AG04449 (cell line): ENCODE measurements at regions of chr7 and their contacts with region 1.

Region 1: DNA sequence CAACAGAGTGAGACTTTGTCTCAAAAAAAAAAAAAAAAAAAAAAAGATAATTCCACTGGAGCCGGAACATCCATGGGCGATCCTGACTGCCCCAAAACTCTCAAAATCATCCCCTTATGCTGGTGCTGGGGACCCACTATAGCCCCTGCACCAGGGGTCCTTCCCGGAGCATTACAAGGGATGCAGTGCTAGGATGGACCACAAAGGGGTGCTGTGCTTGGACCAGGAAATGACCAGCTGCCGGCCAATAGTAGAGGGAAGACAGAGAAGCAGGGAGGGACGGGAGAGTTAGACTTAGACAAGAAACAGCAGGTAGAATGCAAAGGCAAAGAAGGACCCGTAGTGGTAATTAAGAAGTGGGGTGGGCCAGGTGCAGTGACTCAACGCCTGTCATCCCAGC is 40.6 kb downstream of the RCC1L start:
- DNase-seq: no peak
- H3K4me3 ChIP-seq: no peak overlapping the region
- CTCF ChIP-seq: peak; percentile 16

Region 2: GRCh38 chr7:75018570-75019364 is 14.3 kb before region 1 on chr7:
- CTCF ChIA-PET with region 1: no interaction called
- POLR2A ChIA-PET with region 1: no interaction called
- DNase-seq: no peak
- H3K4me3 ChIP-seq: no peak overlapping the region
- CTCF ChIP-seq: no peak

Region 3: GRCh38 chr7:75045881-75046280 is 12.8 kb after region 1 on chr7:
- CTCF ChIA-PET with region 1: interaction called, 70 read pairs
- POLR2A ChIA-PET with region 1: no interaction called
- DNase-seq: no peak
- H3K4me3 ChIP-seq: no peak overlapping the region
- CTCF ChIP-seq: no peak